Heart right ventricle (tissue), 16 donors: ENCODE measurements at regions of chr6 and their contacts with region 1.

Region 1: GRCh38 chr6:11353921-11354389 is 121.5 kb upstream of the NEDD9 start:
- DNase-seq: peak; percentile 31 to 74
- ATAC-seq: peak; percentile 71 to 91 (median 86)
- H3K4me3 ChIP-seq: no peak overlapping the region
- H3K27ac ChIP-seq: peak overlapping the region; percentile 53 to 95 (median 86)
- H3K4me1 ChIP-seq: peaks cover 9 to 80% (median 46%) of the 10 kb centered on the region in 9 donors
- H3K27me3 ChIP-seq: no peaks in the 10 kb centered on the region
- CTCF ChIP-seq: no peak

Region 2: GRCh38 chr6:11263291-11263775 is 90.6 kb before region 1 on chr6:
- intact Hi-C with region 1: loop called in 1 of 10 experiments (anchors 5 kb)
- DNase-seq: peak in 1 of 2 donors; percentile 79
- ATAC-seq: peak; percentile 86 to 97 (median 92)
- H3K4me3 ChIP-seq: peak overlapping the region in 1 of 10 donors; percentile 20
- H3K27ac ChIP-seq: peak overlapping the region; percentile 46 to 85 (median 62)
- H3K4me1 ChIP-seq: peaks cover 7 to 28% (median 19%) of the 10 kb centered on the region in 9 donors
- H3K27me3 ChIP-seq: no peaks in the 10 kb centered on the region
- CTCF ChIP-seq: no peak

Region 3: GRCh38 chr6:11317885-11318771 is 35.8 kb before region 1 on chr6:
- intact Hi-C with region 1: loop called in 3 of 10 experiments (anchors 5 kb)
- DNase-seq: peak; percentile 29 to 62
- ATAC-seq: peak; percentile 65 to 91 (median 78)
- H3K4me3 ChIP-seq: no peak overlapping the region
- H3K27ac ChIP-seq: peak overlapping the region in 9 of 10 donors; percentile 12 to 71 (median 57)
- H3K4me1 ChIP-seq: peaks cover 0 to 44% (median 17%) of the 10 kb centered on the region in 9 donors
- H3K27me3 ChIP-seq: no peaks in the 10 kb centered on the region
- CTCF ChIP-seq: no peak

Region 4: DNA sequence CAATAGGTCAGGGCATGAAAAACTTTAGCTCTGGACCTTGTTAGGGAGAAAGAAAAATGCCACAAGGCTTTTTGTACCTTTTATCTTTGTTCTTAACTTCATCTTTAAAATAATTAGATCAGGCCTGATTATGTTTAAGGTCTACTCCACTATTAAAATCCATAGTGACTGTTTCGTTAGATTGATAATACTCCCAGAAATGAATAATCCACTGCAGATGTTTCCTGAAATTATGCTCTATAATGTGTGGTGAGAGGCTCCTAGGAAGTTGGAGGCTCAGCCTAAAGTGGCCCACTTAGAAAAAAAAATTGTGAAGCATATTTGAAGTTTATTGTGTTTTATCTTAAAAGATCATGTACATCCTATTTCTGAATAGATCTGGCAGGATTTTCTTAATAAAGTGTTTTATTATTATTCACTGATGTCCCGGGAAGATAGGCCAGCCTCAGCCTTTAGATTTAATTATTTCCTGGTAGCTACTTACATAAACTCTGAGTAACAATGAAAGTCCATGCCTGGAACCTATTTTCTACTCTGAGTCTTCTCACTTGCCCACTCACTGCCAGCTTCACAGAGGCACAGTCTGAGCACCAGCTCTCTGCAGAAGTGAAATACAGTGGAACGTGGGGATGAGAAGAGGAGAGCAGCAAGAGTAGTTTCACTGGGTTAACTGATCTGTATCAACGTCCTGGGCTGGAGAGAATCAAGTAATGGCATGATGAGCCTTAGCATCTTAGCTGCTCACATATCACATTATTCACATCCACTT is 56.8 kb after region 1 on chr6:
- intact Hi-C with region 1: no loop called
- DNase-seq: no peak
- ATAC-seq: no peak
- H3K4me3 ChIP-seq: no peak overlapping the region
- H3K27ac ChIP-seq: no peak overlapping the region
- H3K4me1 ChIP-seq: peaks cover 0 to 41% (median 8%) of the 10 kb centered on the region in 9 donors
- H3K27me3 ChIP-seq: no peaks in the 10 kb centered on the region
- CTCF ChIP-seq: no peak